Activated T-helper 1 cell treated with anti-CD3 and anti-CD28 coated beads, Interleukin-12 subunit alpha, Interleukin-12 subunit beta, Interleukin-2, Interleukin-4 antibody, amounts not matched to agents 30 ng/mL and 10 ng/mL and 1 ng/mL, durations not matched to agents 14 hours and 24 hours and 36 hours (primary cell): ENCODE measurements at regions of chr17 and their contacts with region 1.

Region 1: GRCh38 chr17:42221937-42222745 is 27.8 kb upstream of the GHDC start:
- DNase-seq: peak; percentile 38
- H3K4me3 Mint-ChIP-seq: no peak overlapping the region
- H3K27ac Mint-ChIP-seq: peak overlapping the region; percentile 46
- H3K4me1 Mint-ChIP-seq: no peaks in the 10 kb centered on the region
- H3K27me3 Mint-ChIP-seq: no peaks in the 10 kb centered on the region

Region 2: GRCh38 chr17:42312285-42313130 is 90.4 kb after region 1 on chr17:
- intact Hi-C with region 1: loop called (anchors 2 kb)
- DNase-seq: peak; percentile 68
- H3K4me3 Mint-ChIP-seq: peak overlapping the region; percentile 81
- H3K27ac Mint-ChIP-seq: peak overlapping the region; percentile 86
- H3K4me1 Mint-ChIP-seq: peaks cover 86% of the 10 kb centered on the region
- H3K27me3 Mint-ChIP-seq: no peaks in the 10 kb centered on the region